T-cell (primary cell): ENCODE measurements at regions of chr4 and their contacts with region 1.

Region 1: DNA sequence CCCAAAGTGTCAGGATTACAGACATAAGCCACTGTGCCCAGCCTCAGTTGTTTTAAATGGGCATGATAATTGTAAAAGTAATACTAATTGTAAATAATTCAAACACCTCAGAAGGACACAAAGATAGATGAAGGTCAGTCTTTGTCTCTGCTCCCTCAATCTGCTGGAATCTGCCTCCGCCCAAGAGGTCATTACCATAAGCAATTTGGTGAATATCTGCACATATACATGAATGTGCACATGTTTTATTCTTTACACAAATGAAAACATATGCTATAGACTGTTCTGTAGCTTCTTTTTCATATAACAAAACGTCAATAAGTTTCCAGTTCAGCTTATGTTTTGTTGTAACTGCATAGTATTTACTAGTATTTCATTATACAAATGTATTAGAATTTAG is 7.0 kb downstream of the STBD1 start:
- DNase-seq: no peak
- ATAC-seq: no peak
- H3K4me3 ChIP-seq: no peak overlapping the region
- H3K4me3 Mint-ChIP-seq: no peak overlapping the region
- H3K27ac ChIP-seq: no peak overlapping the region
- H3K27ac Mint-ChIP-seq: no peak overlapping the region
- H3K4me1 ChIP-seq: no peaks in the 10 kb centered on the region
- H3K4me1 Mint-ChIP-seq: peaks cover 0 to 2% (median 0%) of the 10 kb centered on the region in 3 donors
- H3K27me3 ChIP-seq: peaks cover 0 to 6% of the 10 kb centered on the region in 2 experiments
- H3K27me3 Mint-ChIP-seq: peaks cover 9 to 10% of the 10 kb centered on the region in 2 donors

Region 2: GRCh38 chr4:76634239-76634638 is 320.7 kb after region 1 on chr4:
- CTCF ChIA-PET with region 1: interaction called in 1 of 2 experiments, 10 read pairs
- POLR2A ChIA-PET with region 1: no interaction called
- DNase-seq: no peak
- ATAC-seq: no peak
- H3K4me3 ChIP-seq: no peak overlapping the region
- H3K4me3 Mint-ChIP-seq: no peak overlapping the region
- H3K27ac ChIP-seq: no peak overlapping the region
- H3K27ac Mint-ChIP-seq: no peak overlapping the region
- H3K4me1 ChIP-seq: no peaks in the 10 kb centered on the region
- H3K4me1 Mint-ChIP-seq: no peaks in the 10 kb centered on the region
- H3K27me3 ChIP-seq: peaks cover 0 to under 1% of the 10 kb centered on the region in 2 experiments
- H3K27me3 Mint-ChIP-seq: peaks cover 26 to 27% of the 10 kb centered on the region in 2 donors